ENCODE measurements at regions of chr9 and their contacts with region 1.

Region 1: DNA sequence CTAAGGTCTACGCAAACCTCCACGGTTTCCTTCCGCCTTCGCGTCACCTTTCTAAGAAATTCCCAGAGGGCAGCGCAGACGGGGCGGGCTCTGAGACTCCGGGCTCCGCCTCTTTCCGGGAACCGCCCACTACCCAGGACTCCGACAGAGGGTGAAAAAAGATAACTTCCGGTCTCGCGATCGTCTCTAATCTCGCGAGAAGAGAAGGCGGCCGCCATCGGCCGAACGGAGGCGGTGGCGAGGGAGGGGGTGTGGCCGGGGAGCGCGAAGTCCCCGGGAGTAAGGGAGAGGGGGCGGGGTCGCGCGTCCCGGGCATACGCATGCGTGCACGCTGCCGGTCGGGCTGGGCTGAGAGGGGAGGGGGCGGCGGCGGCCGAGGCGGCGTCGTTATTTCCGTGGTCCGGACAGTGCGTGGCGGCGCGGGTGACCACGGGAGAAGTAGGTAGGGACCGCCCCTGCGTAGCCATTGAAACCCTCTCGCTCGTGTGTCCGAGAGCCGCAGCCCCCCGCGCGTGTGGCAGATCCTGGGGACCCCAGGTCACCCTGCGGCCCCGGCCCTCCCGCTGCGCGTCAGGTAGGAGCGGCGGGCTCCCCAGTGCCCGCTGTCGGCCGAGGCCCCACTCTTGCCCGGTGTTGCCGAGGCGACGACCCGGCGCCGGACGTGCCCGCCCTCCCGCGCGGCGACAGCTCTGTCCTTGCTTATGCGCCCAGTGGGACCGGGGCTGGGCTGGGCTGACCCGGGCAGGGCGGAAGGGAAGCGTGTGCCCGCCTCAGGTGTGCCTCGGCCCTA is at the start of gene NAA35:
- DNase-seq: peak; percentile 99
- H3K4me3 Mint-ChIP-seq: peak within 1 kb of the TSS; percentile 82
- H3K27ac Mint-ChIP-seq: peak within 1 kb of the TSS; percentile 89
- H3K4me1 Mint-ChIP-seq: peaks cover 17% of the 10 kb centered on the region
- H3K27me3 Mint-ChIP-seq: no peaks in the 10 kb centered on the region
- total RNA-seq, gene NAA35: 14.2 to 14.6 TPM

Region 2: DNA sequence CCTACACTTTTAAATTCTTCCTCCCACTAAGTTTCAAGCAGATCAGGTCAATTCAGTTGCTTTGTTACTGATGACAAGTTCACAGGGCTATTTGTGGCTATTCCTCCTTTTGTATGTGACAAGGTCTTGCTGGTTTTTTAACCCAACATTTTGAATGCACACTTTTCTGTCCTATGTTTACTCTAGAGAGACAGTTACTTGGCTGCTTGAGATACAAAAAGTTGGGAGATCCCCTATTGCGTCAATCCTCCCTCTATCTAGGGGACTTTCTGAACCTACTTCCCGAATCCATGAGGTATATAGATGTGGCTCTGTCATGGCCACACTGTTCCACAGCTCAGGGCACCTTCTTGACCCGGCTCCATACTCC is 884.8 kb before region 1 on chr9:
- CTCF ChIA-PET with region 1: no interaction called
- intact Hi-C with region 1: no loop called
- DNase-seq: no peak
- H3K4me3 Mint-ChIP-seq: no peak overlapping the region
- H3K27ac Mint-ChIP-seq: no peak overlapping the region
- H3K4me1 Mint-ChIP-seq: no peaks in the 10 kb centered on the region
- H3K27me3 Mint-ChIP-seq: peaks cover 18% of the 10 kb centered on the region

Region 3: DNA sequence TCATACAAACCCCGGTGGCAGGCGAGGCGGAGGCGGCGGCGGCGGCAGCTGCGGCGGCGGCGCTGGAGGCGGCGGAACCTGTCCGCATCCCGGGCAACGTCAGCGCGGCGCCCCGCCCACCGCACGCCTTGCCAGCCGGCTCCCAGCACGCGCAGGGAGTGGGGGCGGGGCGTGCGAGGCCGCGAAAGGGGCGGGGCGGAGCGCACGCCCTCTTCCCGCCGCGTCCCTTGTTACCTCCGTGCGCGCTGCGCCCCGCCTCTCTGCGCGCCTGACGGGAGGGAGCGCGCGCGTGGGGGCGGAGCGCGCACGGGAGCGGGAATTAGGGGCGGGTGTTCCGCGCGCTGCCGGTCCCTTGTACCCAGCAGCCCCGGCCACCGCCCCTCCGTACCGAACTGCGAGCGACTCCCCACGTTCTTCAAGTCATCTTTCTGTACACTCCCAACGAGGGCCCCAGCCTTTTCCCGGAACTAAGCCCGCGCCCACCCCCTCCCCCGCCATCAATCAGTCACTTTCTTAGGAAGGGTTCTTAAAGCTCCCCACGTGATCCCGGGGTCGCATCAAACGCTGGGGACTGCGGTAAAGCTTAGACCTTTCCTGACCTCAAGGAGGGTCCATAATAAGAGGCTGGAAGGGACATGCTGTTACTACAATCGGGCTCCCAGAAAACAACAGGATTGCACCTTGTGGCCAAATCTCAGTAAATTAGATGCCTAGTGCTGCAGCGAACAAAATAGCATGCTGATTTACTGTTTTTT is 199.0 kb before region 1 on chr9 and contains the start of gene AGTPBP1:
- CTCF ChIA-PET with region 1: no interaction called
- intact Hi-C with region 1: loop called (anchors 1 kb)
- DNase-seq: peak; percentile 95
- H3K4me3 Mint-ChIP-seq: peak within 1 kb of the TSS; percentile 83
- H3K27ac Mint-ChIP-seq: peak within 1 kb of the TSS; percentile 94
- H3K4me1 Mint-ChIP-seq: peaks cover 30% of the 10 kb centered on the region
- H3K27me3 Mint-ChIP-seq: peaks cover 6% of the 10 kb centered on the region
- total RNA-seq, gene AGTPBP1: 37.6 to 39.0 TPM

Region 4: DNA sequence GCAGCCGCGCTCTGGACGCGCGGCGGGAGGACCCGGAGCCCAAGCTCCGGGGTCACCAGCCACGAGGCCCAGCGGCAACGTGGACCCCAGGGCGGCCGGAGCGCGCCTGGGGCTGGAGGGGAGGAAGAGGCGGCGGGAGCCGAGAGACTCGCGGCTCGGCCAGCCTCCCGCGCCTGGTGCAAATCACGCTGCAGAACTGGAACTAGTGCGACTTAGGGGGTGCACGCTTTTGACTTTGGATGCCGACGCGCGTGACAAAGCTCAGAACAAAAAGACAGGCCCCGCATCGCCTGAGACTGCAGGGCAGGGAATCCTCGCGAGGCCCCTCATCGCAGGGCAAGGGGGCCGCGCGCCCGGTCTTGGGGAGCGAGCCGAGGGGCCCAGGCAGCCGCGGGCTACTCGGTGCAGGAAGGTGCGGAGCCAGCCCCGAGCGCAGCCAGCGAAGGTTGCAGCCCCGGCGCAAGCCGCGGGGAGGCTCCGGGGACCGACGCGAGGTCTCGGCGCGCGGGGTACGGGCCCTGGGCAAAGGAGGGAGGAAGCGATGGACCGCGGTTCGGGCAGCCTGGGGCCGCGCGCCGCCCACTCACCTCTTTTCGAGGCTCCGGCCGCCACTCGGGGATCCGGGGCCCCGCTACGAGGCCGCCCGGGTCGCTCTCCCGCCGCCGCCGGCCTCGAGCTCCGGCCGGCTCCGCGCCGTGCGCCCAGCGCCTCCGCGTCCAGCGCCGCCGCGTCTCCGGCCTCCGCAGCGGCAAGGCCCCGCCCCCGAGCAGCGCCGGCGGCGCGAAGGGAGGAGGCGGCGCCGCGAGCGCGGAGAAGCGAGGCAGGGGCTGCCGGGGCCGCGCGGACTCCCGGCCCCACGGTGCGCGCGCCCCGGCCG is 158.0 kb after region 1 on chr9 and contains the start of gene GOLM1:
- CTCF ChIA-PET with region 1: no interaction called
- intact Hi-C with region 1: loop called (anchors 2 kb)
- DNase-seq: peak; percentile 40
- H3K4me3 Mint-ChIP-seq: peak within 1 kb of the TSS; percentile 77
- H3K27ac Mint-ChIP-seq: no peak within 1 kb of the TSS
- H3K4me1 Mint-ChIP-seq: peaks cover 4% of the 10 kb centered on the region
- H3K27me3 Mint-ChIP-seq: peaks cover 30% of the 10 kb centered on the region
- total RNA-seq, gene GOLM1: 0.89 to 0.93 TPM

Region 5: DNA sequence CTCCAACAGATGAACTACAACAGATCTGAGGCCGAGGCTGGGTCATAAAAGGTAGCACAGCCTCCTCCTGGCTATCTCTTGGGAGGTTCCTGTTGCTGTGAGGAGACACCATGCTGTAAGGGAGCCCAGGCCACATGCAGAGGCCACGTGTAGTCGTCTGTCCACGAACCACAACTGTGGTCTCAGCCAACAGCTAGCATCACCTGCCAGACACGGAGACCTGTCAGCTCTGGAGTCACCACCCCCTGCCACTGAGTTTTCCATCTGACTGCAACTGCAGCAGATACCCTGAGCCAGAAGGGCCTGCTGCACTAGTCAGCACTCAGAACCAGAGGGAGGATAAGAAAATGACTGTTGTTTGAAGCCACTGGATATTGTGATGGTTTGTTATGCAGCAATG is 171.0 kb after region 1 on chr9:
- CTCF ChIA-PET with region 1: no interaction called
- intact Hi-C with region 1: loop called (anchors 2 kb)
- DNase-seq: no peak
- H3K4me3 Mint-ChIP-seq: no peak overlapping the region
- H3K27ac Mint-ChIP-seq: no peak overlapping the region
- H3K4me1 Mint-ChIP-seq: peaks cover 2% of the 10 kb centered on the region
- H3K27me3 Mint-ChIP-seq: peaks cover 9% of the 10 kb centered on the region

Measured in activated naive CD4-positive, alpha-beta T cell treated with anti-CD3 and anti-CD28 coated beads for 36 hours (primary cell).